ENCODE measurements at regions of chr15 and their contacts with region 1.

Region 1: GRCh38 chr15:31326156-31326732 is 391 bp upstream of the KLF13 start:
- DNase-seq: peak; percentile 99
- H3K4me3 ChIP-seq: peak overlapping the region; percentile 75 to 95 (median 82)
- H3K27ac ChIP-seq: peak overlapping the region; percentile 99 to 100 (median 100)
- H3K4me1 ChIP-seq: peaks cover 0 to 40% (median 35%) of the 10 kb centered on the region in 4 donors
- H3K27me3 ChIP-seq: no peaks in the 10 kb centered on the region
- CTCF ChIP-seq: no peak
- EP300 ChIP-seq: peak in 1 of 4 donors; percentile 65
- POLR2A ChIP-seq: peak; percentile 95 to 96

Region 2: GRCh38 chr15:30991255-30992072 is 334.8 kb before region 1 on chr15 and contains the start of gene MTMR10:
- intact Hi-C with region 1: loop called (anchors 5 kb)
- DNase-seq: peak; percentile 79
- H3K4me3 ChIP-seq: peak within 1 kb of the TSS; percentile 78 to 97 (median 93)
- H3K27ac ChIP-seq: peak within 1 kb of the TSS; percentile 92 to 96 (median 94)
- H3K4me1 ChIP-seq: peaks cover 0 to 40% (median 30%) of the 10 kb centered on the region in 4 donors
- H3K27me3 ChIP-seq: no peaks in the 10 kb centered on the region
- CTCF ChIP-seq: no peak
- EP300 ChIP-seq: no peak
- POLR2A ChIP-seq: peak; percentile 17 to 60
- total RNA-seq, gene MTMR10: 24.3 to 31.0 (median 27.9) TPM

Region 3: GRCh38 chr15:31236184-31237042 is 89.8 kb before region 1 on chr15:
- intact Hi-C with region 1: loop called (anchors 1 kb)
- DNase-seq: peak; percentile 96
- H3K4me3 ChIP-seq: peak overlapping the region in 1 of 4 donors; percentile 20
- H3K27ac ChIP-seq: peak overlapping the region; percentile 87 to 90 (median 88)
- H3K4me1 ChIP-seq: peaks cover 0 to 37% (median 26%) of the 10 kb centered on the region in 4 donors
- H3K27me3 ChIP-seq: no peaks in the 10 kb centered on the region
- CTCF ChIP-seq: no peak
- EP300 ChIP-seq: peak in 3 of 4 donors; percentile 44 to 86 (median 50)
- POLR2A ChIP-seq: no peak

Region 4: GRCh38 chr15:31365655-31366127 is 39.4 kb after region 1 on chr15:
- intact Hi-C with region 1: loop called (anchors 1 kb)
- DNase-seq: peak; percentile 99
- H3K4me3 ChIP-seq: peak overlapping the region; percentile 29 to 44 (median 42)
- H3K27ac ChIP-seq: peak overlapping the region; percentile 81 to 92 (median 84)
- H3K4me1 ChIP-seq: peaks cover 0 to 75% (median 61%) of the 10 kb centered on the region in 4 donors
- H3K27me3 ChIP-seq: no peaks in the 10 kb centered on the region
- CTCF ChIP-seq: peak in 2 of 4 experiments; percentile 34 to 42
- EP300 ChIP-seq: peak; percentile 99 to 100 (median 100)
- POLR2A ChIP-seq: no peak

Region 5: DNA sequence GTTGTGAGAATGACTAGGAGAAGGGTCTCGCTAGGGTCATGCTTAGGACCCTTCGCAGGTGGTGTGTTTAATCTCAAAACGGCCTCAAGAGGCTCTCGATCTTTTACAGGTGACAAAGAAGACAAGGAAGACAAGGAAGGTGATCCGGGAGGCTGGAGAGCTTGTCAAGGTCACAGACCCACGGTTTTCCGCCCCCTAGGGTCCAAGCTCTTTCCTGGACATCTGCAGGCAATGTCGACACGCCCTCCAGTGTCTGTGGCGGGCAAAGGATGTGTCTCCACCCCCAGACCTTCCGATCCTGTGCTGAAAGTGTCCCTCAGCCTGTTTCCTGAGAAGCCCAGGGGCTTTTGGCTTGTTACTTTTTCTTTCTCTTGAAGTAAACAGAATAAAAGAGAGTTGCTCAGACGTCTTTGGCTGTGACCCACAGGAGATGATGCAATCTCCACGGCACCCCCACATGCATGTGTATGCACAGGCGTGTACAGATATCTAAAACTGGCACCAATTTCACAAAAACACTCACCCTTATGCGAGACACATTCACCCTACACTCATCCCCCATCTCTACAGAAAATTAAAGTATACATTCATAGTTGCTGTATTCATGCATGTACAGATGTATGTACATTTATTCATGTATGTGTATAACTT is 109.1 kb after region 1 on chr15:
- intact Hi-C with region 1: loop called (anchors 2 kb)
- DNase-seq: peak; percentile 89
- H3K4me3 ChIP-seq: peak overlapping the region in 3 of 4 donors; percentile 1 to 20 (median 6)
- H3K27ac ChIP-seq: peak overlapping the region; percentile 38 to 70 (median 50)
- H3K4me1 ChIP-seq: peaks cover 0 to 14% (median 13%) of the 10 kb centered on the region in 4 donors
- H3K27me3 ChIP-seq: no peaks in the 10 kb centered on the region
- CTCF ChIP-seq: peak; percentile 51 to 71 (median 69)
- EP300 ChIP-seq: no peak
- POLR2A ChIP-seq: no peak